ENCODE measurements at regions of chr7 and their contacts with region 1.

Region 1: DNA sequence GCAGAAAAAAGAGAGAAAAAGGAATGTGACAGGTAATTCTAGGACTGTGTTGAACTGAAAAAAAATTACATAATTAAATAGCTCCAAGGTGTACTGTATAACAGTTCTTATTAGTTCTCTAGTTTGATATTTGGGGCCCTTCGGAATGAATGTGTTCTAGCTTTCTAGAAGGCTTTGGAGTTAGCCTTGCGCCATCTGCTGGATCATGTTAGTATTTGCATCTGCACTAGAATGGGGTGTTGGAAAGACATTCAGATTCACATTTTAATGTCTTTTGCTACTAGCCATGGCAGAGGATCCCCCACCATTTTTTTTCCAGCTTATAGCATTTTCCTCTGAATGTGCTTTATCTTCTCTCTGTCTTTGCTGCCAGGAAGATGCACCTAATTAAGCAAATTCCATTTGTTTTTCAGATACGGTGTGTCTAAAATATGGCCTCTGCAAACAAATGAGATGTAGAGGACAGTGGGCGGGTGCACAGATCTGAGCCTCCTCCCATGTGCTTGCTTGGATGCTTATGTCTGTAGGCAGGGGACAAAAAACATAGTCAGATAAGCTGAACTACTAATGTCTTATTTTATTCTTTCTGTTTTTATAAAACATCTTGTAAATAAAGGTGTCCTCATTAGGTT is 238.5 kb downstream of the PHF14 start:
- H3K4me3 Mint-ChIP-seq: no peak overlapping the region
- H3K27ac Mint-ChIP-seq: no peak overlapping the region
- H3K4me1 Mint-ChIP-seq: peaks cover 12% of the 10 kb centered on the region
- H3K27me3 Mint-ChIP-seq: no peaks in the 10 kb centered on the region

Region 2: GRCh38 chr7:10412422-10413019 is 799.7 kb before region 1 on chr7:
- intact Hi-C with region 1: loop called (anchors 10 kb)
- H3K4me3 Mint-ChIP-seq: no peak overlapping the region
- H3K27ac Mint-ChIP-seq: no peak overlapping the region
- H3K4me1 Mint-ChIP-seq: no peaks in the 10 kb centered on the region
- H3K27me3 Mint-ChIP-seq: no peaks in the 10 kb centered on the region

Region 3: DNA sequence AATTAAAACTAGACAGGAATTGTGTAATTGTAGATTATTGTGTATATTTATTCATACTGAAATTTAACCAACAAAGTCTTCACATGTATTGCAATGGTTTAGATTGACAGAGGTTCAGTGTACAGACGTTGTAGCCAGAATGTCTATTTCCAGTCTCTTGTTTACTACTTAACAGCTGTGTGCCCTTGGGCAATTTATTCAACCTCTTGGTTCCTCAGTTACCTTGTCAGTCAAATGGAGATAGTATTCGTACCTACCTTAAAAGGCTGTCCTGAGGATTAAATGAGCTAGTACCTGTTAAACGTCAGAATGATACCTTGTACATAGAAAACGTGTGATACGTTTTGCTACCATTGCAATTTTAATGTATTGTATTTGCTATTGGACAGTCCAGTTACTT is 37.6 kb after region 1 on chr7:
- intact Hi-C with region 1: no loop called
- H3K4me3 Mint-ChIP-seq: no peak overlapping the region
- H3K27ac Mint-ChIP-seq: no peak overlapping the region
- H3K4me1 Mint-ChIP-seq: no peaks in the 10 kb centered on the region
- H3K27me3 Mint-ChIP-seq: no peaks in the 10 kb centered on the region

Measured in dendritic cell treated with granulocyte-macrophage colony-stimulating factor and Interleukin-4, amounts not matched to agents 40 ng/mL and 50 ng/mL, for 4 days (primary cell).